ENCODE measurements at regions of chr6 and their contacts with region 1.

Region 1: GRCh38 chr6:44127186-44128019 is at the starts of genes MRPL14 and TMEM63B:
- DNase-seq: peak; percentile 95
- ATAC-seq: peak; percentile 81
- H3K4me3 Mint-ChIP-seq: peak within 1 kb of the TSS; percentile 82
- H3K27ac Mint-ChIP-seq: peak within 1 kb of the TSS; percentile 96
- H3K4me1 Mint-ChIP-seq: peaks cover 46% of the 10 kb centered on the region
- H3K27me3 Mint-ChIP-seq: no peaks in the 10 kb centered on the region
- total RNA-seq, gene MRPL14: 29.5 to 43.3 TPM
- total RNA-seq, gene TMEM63B: 10.9 to 15.2 TPM

Region 2: GRCh38 chr6:43621429-43622180 is 505.8 kb before region 1 on chr6:
- CTCF ChIA-PET with region 1: no interaction called
- POLR2A ChIA-PET with region 1: interaction called, 11 read pairs
- intact Hi-C with region 1: no loop called
- DNase-seq: no peak
- ATAC-seq: no peak
- H3K4me3 Mint-ChIP-seq: no peak overlapping the region
- H3K27ac Mint-ChIP-seq: no peak overlapping the region
- H3K4me1 Mint-ChIP-seq: peaks cover 2% of the 10 kb centered on the region
- H3K27me3 Mint-ChIP-seq: no peaks in the 10 kb centered on the region

Region 3: GRCh38 chr6:43667245-43668150 is 459.9 kb before region 1 on chr6:
- CTCF ChIA-PET with region 1: no interaction called
- POLR2A ChIA-PET with region 1: no interaction called
- intact Hi-C with region 1: no loop called
- DNase-seq: peak; percentile 87
- ATAC-seq: peak; percentile 53
- H3K4me3 Mint-ChIP-seq: peak overlapping the region; percentile 43
- H3K27ac Mint-ChIP-seq: peak overlapping the region; percentile 77
- H3K4me1 Mint-ChIP-seq: peaks cover 44% of the 10 kb centered on the region
- H3K27me3 Mint-ChIP-seq: no peaks in the 10 kb centered on the region

Region 4: DNA sequence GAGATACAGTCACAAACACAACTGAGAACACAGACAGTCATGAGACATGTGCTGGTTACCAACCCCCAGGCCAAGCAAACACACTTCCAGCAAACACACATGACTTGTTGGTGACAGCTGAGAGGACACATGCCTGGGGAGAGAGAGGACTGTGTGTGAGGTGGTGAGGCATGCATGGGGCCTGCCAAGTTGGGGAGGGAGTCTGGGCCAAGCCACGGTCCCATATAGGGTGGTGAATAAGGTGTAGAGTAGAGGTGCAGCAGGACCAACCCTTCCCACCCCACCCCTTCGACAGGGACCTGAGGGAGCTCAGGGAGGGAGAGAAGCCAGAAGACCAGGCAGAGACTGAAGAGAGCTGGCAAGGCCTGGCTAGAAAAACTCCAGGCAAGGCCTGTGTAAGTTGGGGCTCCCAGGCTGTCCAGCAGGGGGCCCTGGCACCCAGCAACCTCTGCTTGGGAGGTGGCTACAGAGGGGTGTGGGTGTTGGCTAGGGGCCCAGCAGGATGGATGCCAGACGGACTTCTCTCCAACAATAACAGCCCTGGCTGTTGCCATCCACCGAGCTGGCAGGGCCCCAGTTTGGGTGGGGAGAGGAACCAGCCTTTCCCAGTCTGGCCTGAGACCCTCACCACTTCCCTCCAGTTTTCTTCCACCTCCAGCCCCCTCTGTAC is 94.0 kb after region 1 on chr6:
- CTCF ChIA-PET with region 1: interaction called, 3 read pairs
- POLR2A ChIA-PET with region 1: no interaction called
- intact Hi-C with region 1: loop called in 1 of 2 experiments (anchors 1 kb)
- DNase-seq: peak; percentile 90
- ATAC-seq: peak; percentile 70
- H3K4me3 Mint-ChIP-seq: peak overlapping the region; percentile 10
- H3K27ac Mint-ChIP-seq: peak overlapping the region; percentile 69
- H3K4me1 Mint-ChIP-seq: peaks cover 48% of the 10 kb centered on the region
- H3K27me3 Mint-ChIP-seq: peaks cover 3% of the 10 kb centered on the region

Region 5: DNA sequence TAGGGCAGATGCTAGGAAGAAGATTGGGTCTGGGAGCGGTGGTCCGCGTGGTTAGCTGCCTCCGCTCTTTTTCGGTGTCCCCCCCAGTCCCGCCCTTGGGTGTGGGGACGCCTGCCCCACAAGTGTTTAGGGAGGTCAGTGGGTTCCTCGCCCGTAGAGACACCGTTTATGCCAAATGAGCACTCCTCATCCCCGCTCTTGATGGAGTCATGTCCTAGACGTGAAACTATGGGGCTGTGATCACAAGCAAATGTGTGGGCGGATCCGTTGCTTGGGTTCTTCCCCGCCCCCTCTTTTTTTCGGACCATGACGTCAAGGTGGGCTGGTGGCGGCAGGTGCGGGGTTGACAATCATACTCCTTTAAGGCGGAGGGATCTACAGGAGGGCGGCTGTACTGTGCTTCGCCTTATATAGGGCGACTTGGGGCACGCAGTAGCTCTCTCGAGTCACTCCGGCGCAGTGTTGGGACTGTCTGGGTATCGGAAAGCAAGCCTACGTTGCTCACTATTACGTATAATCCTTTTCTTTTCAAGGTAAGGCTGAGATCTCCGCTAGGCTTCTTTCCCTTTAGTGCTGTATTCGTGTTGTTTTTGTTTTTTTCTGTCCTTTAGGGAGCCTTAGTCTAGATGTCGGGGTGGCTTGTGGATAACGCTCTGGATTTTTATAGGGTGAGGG is 119.4 kb after region 1 on chr6 and contains the start of gene HSP90AB1:
- CTCF ChIA-PET with region 1: no interaction called
- POLR2A ChIA-PET with region 1: interaction called, 3 read pairs
- intact Hi-C with region 1: loop called (anchors 1 to 2 kb)
- DNase-seq: peak; percentile 98
- ATAC-seq: peak; percentile 86
- H3K4me3 Mint-ChIP-seq: peak within 1 kb of the TSS; percentile 97
- H3K27ac Mint-ChIP-seq: peak within 1 kb of the TSS; percentile 99
- H3K4me1 Mint-ChIP-seq: peaks cover 44% of the 10 kb centered on the region
- H3K27me3 Mint-ChIP-seq: no peaks in the 10 kb centered on the region
- total RNA-seq, gene HSP90AB1: 2,120 to 2,263 TPM

Region 6: GRCh38 chr6:44321210-44321609 is 193.8 kb after region 1 on chr6:
- CTCF ChIA-PET with region 1: no interaction called
- POLR2A ChIA-PET with region 1: no interaction called
- intact Hi-C with region 1: no loop called
- DNase-seq: no peak
- ATAC-seq: no peak
- H3K4me3 Mint-ChIP-seq: no peak overlapping the region
- H3K27ac Mint-ChIP-seq: no peak overlapping the region
- H3K4me1 Mint-ChIP-seq: no peaks in the 10 kb centered on the region
- H3K27me3 Mint-ChIP-seq: peaks cover 16% of the 10 kb centered on the region

Region 7: DNA sequence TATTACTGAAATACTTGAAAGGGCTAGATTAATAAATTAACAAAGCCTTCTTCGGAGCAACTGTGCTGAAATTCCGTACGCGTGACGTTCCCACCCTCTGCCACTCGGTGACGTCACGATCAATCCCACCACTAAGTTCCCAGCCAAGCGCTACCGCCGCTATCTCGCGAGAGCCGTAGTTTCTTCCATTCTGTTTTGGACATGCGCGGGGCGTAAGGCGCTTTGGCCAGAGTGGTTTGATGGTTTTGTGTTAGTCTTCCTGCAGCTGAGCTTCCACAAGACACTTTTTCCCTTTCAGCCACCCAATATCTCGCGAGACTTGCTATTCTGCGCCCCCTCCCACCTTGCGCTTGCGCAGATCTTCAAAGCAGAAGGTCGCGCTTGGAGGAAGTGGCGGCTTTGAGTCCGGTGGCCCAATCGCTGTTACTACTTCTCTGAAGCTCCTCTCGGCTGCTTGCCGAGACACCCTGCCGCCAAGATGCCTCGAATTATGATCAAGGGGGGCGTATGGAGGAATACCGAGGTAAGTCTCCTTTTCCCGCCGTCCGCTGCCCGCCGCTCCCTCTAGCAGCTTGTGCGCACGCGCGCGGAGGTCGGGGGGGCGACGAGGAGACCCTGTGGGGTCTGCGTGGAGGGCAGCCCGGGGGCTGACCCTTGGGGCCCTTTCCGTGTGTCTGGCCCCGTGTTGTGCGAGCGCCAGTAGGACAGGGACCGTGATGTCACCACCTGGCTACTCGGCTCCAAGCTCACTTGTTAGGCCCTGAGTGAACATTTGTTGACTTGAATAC is 260.1 kb after region 1 on chr6 and contains the start of gene CDC5L:
- CTCF ChIA-PET with region 1: no interaction called
- POLR2A ChIA-PET with region 1: no interaction called
- intact Hi-C with region 1: loop called in 1 of 2 experiments (anchors 1 kb)
- DNase-seq: peak; percentile 95
- ATAC-seq: peak; percentile 95
- H3K4me3 Mint-ChIP-seq: peak within 1 kb of the TSS; percentile 97
- H3K27ac Mint-ChIP-seq: peak within 1 kb of the TSS; percentile 98
- H3K4me1 Mint-ChIP-seq: peaks cover 31% of the 10 kb centered on the region
- H3K27me3 Mint-ChIP-seq: no peaks in the 10 kb centered on the region
- total RNA-seq, gene CDC5L: 25.1 to 28.9 TPM

Measured in activated CD4-positive, alpha-beta T cell treated with anti-CD3 and anti-CD28 coated beads for 36 hours (primary cell).